ENCODE measurements at regions of chr2 and their contacts with region 1.

Region 1: DNA sequence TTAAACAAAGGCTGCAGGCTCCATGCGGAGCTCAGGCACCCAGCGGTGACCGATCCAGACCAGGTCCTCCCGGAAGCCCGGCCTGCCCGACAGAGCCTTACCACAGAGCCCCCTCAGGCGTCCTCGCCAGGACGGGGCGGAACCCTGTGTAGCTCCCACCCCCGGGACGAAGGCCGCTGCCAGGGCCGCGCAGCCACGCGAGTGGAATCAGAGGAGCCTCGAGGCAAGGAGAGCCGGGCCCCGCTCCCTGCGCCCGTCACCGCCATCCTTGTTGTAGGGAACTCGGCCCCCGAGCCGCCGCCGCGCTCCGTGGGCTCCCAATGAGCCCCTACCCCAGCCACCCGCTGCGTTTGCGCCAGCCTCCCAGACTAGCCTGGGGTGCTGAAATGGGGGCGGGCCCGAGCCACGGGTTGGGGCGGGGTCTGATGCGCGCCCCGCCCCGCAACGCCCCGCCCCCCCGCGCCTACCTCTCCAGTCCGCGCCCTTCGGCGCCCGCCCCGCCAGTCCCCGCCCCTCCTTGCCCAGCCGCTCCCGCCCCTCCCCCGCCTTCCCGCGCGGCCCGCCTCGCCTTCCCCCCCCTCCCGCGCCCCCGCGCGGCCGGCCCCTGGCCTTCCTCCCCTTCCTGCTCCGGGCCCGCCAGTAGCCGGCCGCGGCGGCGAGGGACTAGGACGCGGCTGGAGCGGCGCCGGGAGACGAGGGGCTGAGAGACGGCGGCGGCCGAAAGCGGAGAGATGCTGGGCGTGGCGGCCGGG is at the start of gene LIMS1:
- DNase-seq: peak; percentile 82
- ATAC-seq: peak; percentile 91
- H3K4me3 ChIP-seq: peak within 1 kb of the TSS; percentile 95 to 99 (median 97)
- H3K27ac ChIP-seq: peak within 1 kb of the TSS; percentile 96
- H3K4me1 ChIP-seq: peaks cover 61% of the 10 kb centered on the region
- H3K27me3 ChIP-seq: no peaks in the 10 kb centered on the region; a peak in 1 of 5 replicates
- CTCF ChIP-seq: no peak; the same call in 1 of the 2 replicates
- EP300 ChIP-seq: peak in 1 of 2 experiments; percentile 17; a peak in 1 of 4 replicates
- POLR2A ChIP-seq: peak; percentile 97
- RAD21 ChIP-seq: peak; percentile 72
- total RNA-seq, gene LIMS1: 38.3 and 55.1 TPM in 2 replicates

Region 2: GRCh38 chr2:108492364-108492763 is 41.6 kb before region 1 on chr2:
- CTCF ChIA-PET with region 1: no interaction called
- POLR2A ChIA-PET with region 1: interaction called, 6 read pairs
- in situ Hi-C with region 1: no loop called
- intact Hi-C with region 1: loop called (anchors 5 kb)
- DNase-seq: peak; percentile 42
- ATAC-seq: peak; percentile 71
- H3K4me3 ChIP-seq: no peak overlapping the region
- H3K27ac ChIP-seq: no peak overlapping the region
- H3K4me1 ChIP-seq: peaks cover 27% of the 10 kb centered on the region
- H3K27me3 ChIP-seq: no peaks in the 10 kb centered on the region
- CTCF ChIP-seq: no peak
- EP300 ChIP-seq: 0 out of 4 replicates have a peak, but pooled peaks of 1 of the 2 experiments have one; percentile 7
- POLR2A ChIP-seq: no peak
- RAD21 ChIP-seq: no peak

Measured in HepG2 (cell line).